ENCODE measurements at regions of chr19 and their contacts with region 1.

Region 1: DNA sequence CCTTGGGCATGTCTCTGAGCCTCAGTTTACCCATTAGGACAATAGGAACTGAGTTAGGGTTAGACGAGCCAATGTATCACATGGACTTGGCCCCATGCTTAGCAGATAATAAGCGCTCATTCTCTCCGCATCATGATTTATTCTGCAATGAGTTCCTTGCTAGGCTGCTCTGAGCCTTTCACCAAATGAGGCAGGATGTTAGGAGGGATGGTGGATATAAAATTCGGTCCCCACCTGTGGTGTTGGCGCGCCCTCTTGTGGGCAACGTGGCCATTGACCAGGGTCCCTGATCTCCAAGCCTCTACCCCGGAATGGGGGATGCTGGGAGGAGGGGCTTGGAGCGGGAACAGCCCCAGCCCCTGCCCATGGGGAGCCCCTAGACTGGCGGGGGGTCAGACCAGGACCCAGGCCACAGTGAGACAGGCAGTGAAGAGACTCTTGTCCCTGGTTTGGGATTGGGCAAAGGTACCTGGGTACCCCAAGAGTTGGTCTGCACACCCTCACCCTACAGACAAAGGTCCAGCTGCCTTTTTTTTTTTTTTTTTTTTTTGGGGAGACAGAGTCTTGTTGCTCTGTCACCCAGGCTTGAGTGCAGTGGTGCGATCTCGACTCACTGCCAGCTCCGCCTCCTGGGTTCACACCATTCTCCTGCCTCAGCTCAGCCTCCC is 43.9 kb downstream of the CERS4 start:
- DNase-seq: peak; percentile 78 to 88 (median 87)
- ATAC-seq: peak; percentile 91
- H3K4me3 ChIP-seq: no peak overlapping the region
- H3K4me1 ChIP-seq: no peaks in the 10 kb centered on the region
- CTCF ChIP-seq: peak; percentile 78

Region 2: DNA sequence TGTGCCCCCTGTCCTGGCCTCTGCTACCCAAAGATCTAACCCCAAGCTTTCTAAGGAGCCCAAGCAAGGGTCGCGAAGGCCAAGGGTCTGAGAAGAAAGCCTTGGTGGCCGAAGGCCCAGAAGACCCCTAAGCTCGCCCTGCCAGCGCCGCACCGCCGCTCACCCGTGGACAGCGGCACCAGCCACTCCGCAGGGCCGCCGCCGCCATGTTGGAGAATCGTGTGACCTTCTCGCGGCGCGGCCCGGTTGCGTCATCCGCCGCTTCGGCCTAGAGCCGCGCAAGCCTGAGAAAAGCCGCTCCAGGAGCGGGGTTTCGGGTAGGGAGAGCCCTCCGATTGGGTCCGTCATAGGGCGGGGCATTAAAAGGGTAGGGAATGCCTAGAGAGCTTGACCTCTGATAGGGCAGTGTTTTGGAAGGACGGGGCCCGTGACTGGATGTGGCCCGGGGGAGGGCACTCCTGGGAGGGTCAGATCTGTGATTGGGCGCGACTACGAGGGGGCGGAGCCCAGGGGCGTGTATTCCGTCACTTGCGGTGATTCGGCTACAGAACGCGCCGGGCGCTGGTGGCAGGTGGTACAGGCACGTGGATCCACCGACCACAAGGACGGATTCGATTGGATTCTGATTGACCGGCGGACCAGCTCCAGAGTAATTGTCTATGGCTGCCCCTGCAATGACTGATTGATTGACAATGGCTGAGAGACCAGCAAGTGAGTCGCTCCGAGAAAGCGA is 309.4 kb before region 1 on chr19 and contains the start of gene TIMM44:
- intact Hi-C with region 1: loop called (anchors 10 kb)
- DNase-seq: peak; percentile 98 to 99 (median 99)
- ATAC-seq: peak; percentile 97
- H3K4me3 ChIP-seq: peak within 1 kb of the TSS; percentile 91
- H3K4me1 ChIP-seq: peaks cover 10% of the 10 kb centered on the region
- CTCF ChIP-seq: no peak
- total RNA-seq, gene TIMM44: 55.5 to 80.4 (median 63.4) TPM

Region 3: GRCh38 chr19:8158411-8159074 is 94.5 kb before region 1 on chr19:
- intact Hi-C with region 1: loop called in 1 of 2 experiments (anchors 5 kb)
- DNase-seq: peak in 1 of 3 donors; percentile 65
- ATAC-seq: peak; percentile 57
- H3K4me3 ChIP-seq: no peak overlapping the region
- H3K4me1 ChIP-seq: no peaks in the 10 kb centered on the region
- CTCF ChIP-seq: peak; percentile 14

Region 4: GRCh38 chr19:8352134-8352827 is 99.2 kb after region 1 on chr19:
- intact Hi-C with region 1: no loop called
- DNase-seq: peak in 1 of 3 donors; percentile 10
- ATAC-seq: no peak
- H3K4me3 ChIP-seq: no peak overlapping the region
- H3K4me1 ChIP-seq: no peaks in the 10 kb centered on the region
- CTCF ChIP-seq: no peak